Heart right ventricle (tissue), 16 donors: ENCODE measurements at regions of chr1 and their contacts with region 1.

Region 1: DNA sequence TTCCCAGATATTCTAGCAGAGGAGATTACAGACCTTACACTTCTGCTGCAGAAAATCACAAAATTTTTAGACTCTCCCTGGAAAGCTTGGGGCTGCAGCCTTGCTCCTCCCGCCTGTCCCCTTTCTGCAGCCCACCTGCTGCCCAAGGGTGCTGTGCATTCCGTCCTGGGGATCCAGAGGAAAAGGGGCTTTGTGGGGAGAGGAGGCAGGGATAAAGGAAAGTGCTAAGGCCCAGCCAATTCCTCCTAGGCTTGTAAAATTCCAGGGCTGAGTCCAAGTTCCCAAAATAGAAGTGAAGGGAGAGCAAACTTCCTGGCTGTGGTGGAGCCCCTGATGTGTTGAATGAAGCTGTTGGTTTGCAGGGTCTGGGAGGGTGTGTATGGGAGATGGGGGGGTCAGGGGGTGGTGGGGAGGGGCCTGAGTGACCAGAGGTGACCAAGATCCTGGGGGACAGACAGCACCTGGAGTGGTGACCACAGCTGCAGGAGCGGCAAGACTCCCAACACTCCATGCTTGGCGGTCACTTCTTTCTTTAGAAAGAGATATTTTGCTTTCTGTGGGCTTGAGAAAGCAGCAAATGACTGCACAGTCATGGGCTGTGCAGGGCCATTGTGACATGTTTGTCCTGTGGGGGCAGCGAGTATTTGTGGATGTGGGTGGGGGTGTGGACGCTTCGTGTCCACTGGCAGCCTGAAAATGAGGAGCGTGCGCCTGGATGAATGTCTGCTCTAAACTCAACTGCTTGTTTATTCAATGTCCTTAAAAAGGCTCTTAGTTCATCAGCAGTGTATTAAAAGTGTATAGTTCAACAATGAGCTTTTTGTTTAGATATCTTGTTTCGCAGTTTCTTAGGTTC is 68.4 kb downstream of the TLR5 start:
- DNase-seq: peak in 1 of 2 donors; percentile 45
- ATAC-seq: peak; percentile 55 to 68 (median 60)
- H3K4me3 ChIP-seq: peak overlapping the region in 1 of 10 donors; percentile 29
- H3K27ac ChIP-seq: peak overlapping the region in 8 of 10 donors; percentile 7 to 83 (median 63)
- H3K4me1 ChIP-seq: peaks cover 16 to 58% (median 38%) of the 10 kb centered on the region in 9 donors
- H3K27me3 ChIP-seq: no peaks in the 10 kb centered on the region
- CTCF ChIP-seq: no peak

Region 2: GRCh38 chr1:222928212-222928611 is 146.5 kb before region 1 on chr1:
- intact Hi-C with region 1: loop called in 6 of 10 experiments (anchors 5 to 10 kb)
- DNase-seq: peak; percentile 53 to 65
- ATAC-seq: peak; percentile 94 to 99 (median 96)
- H3K4me3 ChIP-seq: peak overlapping the region; percentile 11 to 54 (median 42)
- H3K27ac ChIP-seq: peak overlapping the region in 7 of 10 donors; percentile 5 to 68 (median 47)
- H3K4me1 ChIP-seq: peaks cover 0 to 76% (median 27%) of the 10 kb centered on the region in 9 donors
- H3K27me3 ChIP-seq: no peaks in the 10 kb centered on the region
- CTCF ChIP-seq: peak in 3 of 9 donors; percentile 33 to 39 (median 37)

Region 3: GRCh38 chr1:223010582-223011504 is 63.8 kb before region 1 on chr1:
- intact Hi-C with region 1: loop called in 2 of 10 experiments (anchors 10 kb)
- DNase-seq: no peak
- ATAC-seq: no peak
- H3K4me3 ChIP-seq: no peak overlapping the region
- H3K27ac ChIP-seq: peak overlapping the region in 3 of 10 donors; percentile 22 to 57 (median 34)
- H3K4me1 ChIP-seq: peaks cover 0 to 34% (median 11%) of the 10 kb centered on the region in 9 donors
- H3K27me3 ChIP-seq: no peaks in the 10 kb centered on the region
- CTCF ChIP-seq: no peak

Region 4: DNA sequence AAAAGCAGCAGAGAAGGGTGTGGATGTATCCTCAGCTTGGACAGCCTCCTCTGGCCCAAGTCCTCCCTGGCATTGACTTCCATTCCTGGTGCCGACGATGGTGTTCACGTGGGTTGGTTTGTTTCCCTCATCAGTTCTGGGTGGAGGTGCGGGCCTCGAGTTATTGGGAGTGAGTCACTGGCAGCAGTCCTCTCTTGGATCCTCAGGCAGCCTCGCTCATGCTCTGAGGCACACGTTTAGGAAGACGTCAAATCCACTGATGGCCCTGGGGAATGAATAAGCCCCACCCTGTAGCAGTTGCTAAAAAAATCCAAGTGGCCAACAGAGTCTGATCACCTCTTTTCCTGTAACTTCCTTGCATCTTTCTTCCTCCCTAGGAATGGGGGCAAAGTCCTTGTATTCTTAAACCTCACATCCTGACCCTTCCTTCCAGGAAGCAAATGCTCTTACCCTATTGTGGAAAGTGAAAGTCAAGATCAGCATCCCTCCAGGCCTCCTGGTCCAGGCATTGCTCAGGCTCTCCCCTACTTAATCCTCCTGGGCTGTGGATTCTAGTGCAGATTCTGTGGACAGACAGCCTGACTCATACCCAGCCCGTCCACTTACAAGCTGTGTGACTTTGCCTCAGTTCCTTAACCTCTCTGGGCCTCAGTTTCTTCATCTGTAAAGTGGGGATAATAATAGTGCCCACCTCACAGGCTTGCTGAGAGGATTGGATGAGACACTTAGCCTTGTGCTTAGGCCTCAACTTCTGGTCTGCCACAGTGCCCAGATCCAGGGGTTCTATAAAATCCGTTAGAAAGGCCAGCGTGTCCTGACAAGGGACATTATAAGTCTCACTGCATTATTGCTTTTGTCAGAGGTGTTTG is 42.7 kb before region 1 on chr1:
- intact Hi-C with region 1: loop called in 2 of 10 experiments (anchors 5 kb)
- DNase-seq: peak; percentile 34 to 62
- ATAC-seq: peak; percentile 50 to 97 (median 92)
- H3K4me3 ChIP-seq: no peak overlapping the region
- H3K27ac ChIP-seq: peak overlapping the region in 9 of 10 donors; percentile 13 to 74 (median 53)
- H3K4me1 ChIP-seq: peaks cover 0 to 29% (median 13%) of the 10 kb centered on the region in 9 donors
- H3K27me3 ChIP-seq: no peaks in the 10 kb centered on the region
- CTCF ChIP-seq: no peak